Heart right ventricle (tissue), 16 donors: ENCODE measurements at regions of chr4 and their contacts with region 1.

Region 1: GRCh38 chr4:105399532-105400161 is 74.2 kb downstream of the PPA2 start:
- DNase-seq: no peak
- ATAC-seq: no peak
- H3K4me3 ChIP-seq: no peak overlapping the region
- H3K27ac ChIP-seq: no peak overlapping the region
- H3K4me1 ChIP-seq: no peaks in the 10 kb centered on the region
- H3K27me3 ChIP-seq: no peaks in the 10 kb centered on the region
- CTCF ChIP-seq: no peak

Region 2: GRCh38 chr4:105453550-105454205 is 54.0 kb after region 1 on chr4:
- intact Hi-C with region 1: loop called in 1 of 10 experiments (anchors 10 kb)
- DNase-seq: no peak
- ATAC-seq: no peak
- H3K4me3 ChIP-seq: no peak overlapping the region
- H3K27ac ChIP-seq: no peak overlapping the region
- H3K4me1 ChIP-seq: peaks cover 0 to 34% (median 14%) of the 10 kb centered on the region in 9 donors
- H3K27me3 ChIP-seq: no peaks in the 10 kb centered on the region
- CTCF ChIP-seq: no peak